Activated CD4-positive, alpha-beta memory T cell treated with anti-CD3 and anti-CD28 coated beads, Interleukin-2, amount 10 ng/mL, durations not matched to agents 7 days and 5 days (primary cell): ENCODE measurements at regions of chr5 and their contacts with region 1.

Region 1: DNA sequence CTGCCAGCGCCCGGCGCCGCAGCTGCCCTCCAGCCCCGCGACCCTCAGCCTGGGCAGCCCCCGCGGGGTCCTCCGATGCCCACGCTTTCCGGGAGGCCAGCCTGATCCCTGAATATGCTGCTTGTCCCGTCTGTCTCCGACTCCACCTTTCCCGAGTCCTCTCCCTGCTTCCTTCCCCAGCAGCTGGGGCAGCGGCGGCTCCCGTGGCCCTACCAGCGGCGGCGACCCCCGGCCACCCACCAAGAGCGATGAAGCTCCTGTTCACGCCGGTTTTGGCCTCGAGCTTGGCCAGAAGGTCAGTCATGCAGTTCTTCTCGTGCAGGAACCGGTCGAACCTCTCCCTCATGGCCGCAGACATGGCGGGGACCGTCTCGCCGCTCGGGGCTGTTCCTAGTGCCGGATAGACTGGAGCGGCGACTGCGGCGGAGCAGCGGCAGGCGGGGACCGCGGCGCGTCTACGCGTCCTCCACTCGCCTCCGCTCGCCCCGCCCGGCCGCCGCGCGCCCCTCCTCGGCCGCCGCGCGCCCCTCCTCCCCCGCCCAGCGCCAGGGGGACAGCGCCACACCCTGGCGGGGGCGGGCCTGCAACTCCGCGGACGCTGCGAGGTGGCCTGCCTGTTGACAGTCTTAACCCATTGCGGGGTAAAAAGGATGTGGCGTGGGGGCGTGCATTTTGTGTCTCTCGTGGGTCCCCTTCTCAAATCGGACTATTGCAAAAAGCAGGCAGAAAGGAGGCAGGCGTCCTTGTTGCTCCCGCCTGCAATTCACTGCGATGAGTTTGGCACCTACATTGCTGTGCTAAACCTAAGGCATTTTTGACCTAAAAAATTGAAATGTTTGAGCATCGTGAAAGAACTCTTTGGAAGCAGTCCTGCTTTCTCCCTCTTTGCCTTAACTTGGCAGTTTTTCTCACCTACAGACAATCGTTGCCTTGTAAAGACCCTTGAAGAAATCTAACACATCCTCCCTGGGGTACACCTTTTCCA is at the start of gene REEP5:
- DNase-seq: peak; percentile 90
- H3K4me3 Mint-ChIP-seq: peak within 1 kb of the TSS; percentile 92
- H3K27ac Mint-ChIP-seq: peak within 1 kb of the TSS; percentile 99
- H3K4me1 Mint-ChIP-seq: peaks cover 66% of the 10 kb centered on the region
- H3K27me3 Mint-ChIP-seq: no peaks in the 10 kb centered on the region
- total RNA-seq, gene REEP5: 95.0 to 96.3 TPM

Region 2: GRCh38 chr5:112869948-112870347 is 52.2 kb before region 1 on chr5:
- CTCF ChIA-PET with region 1: interaction called, 10 read pairs
- POLR2A ChIA-PET with region 1: interaction called, 5 read pairs
- DNase-seq: no peak
- H3K4me3 Mint-ChIP-seq: no peak overlapping the region
- H3K27ac Mint-ChIP-seq: peak overlapping the region; percentile 68
- H3K4me1 Mint-ChIP-seq: peaks cover 64% of the 10 kb centered on the region
- H3K27me3 Mint-ChIP-seq: no peaks in the 10 kb centered on the region

Region 3: DNA sequence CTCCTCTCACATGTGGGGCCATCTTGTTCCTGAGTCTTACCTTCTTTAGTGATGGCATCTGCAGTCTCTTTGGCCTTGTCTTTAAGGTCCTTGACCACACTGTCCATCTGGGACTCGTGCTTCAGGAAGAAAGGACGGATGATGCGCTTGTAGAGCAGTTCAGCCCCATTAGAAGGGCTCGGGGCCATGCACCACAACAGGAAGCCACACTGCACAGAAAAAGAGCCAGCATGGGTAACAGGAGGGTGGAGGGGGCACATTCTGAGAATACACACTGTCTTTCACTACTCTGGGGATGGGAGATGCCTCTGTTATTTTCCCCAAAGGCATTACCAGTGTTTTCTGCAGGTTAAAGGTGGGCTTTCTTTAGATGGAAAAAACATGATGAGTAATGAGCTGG is 35.1 kb before region 1 on chr5:
- CTCF ChIA-PET with region 1: interaction called, 16 read pairs
- POLR2A ChIA-PET with region 1: interaction called, 11 read pairs
- DNase-seq: peak; percentile 48
- H3K4me3 Mint-ChIP-seq: peak overlapping the region; percentile 14
- H3K27ac Mint-ChIP-seq: peak overlapping the region; percentile 80
- H3K4me1 Mint-ChIP-seq: peaks cover 43% of the 10 kb centered on the region
- H3K27me3 Mint-ChIP-seq: no peaks in the 10 kb centered on the region

Region 4: GRCh38 chr5:112968411-112969106 is 46.4 kb after region 1 on chr5:
- CTCF ChIA-PET with region 1: interaction called, 24 read pairs
- POLR2A ChIA-PET with region 1: interaction called, 94 read pairs
- DNase-seq: no peak
- H3K4me3 Mint-ChIP-seq: no peak overlapping the region
- H3K27ac Mint-ChIP-seq: peak overlapping the region; percentile 10
- H3K4me1 Mint-ChIP-seq: peaks cover 36% of the 10 kb centered on the region
- H3K27me3 Mint-ChIP-seq: no peaks in the 10 kb centered on the region